AG04450 (cell line): ENCODE measurements at regions of chr6 and their contacts with region 1.

Region 1: DNA sequence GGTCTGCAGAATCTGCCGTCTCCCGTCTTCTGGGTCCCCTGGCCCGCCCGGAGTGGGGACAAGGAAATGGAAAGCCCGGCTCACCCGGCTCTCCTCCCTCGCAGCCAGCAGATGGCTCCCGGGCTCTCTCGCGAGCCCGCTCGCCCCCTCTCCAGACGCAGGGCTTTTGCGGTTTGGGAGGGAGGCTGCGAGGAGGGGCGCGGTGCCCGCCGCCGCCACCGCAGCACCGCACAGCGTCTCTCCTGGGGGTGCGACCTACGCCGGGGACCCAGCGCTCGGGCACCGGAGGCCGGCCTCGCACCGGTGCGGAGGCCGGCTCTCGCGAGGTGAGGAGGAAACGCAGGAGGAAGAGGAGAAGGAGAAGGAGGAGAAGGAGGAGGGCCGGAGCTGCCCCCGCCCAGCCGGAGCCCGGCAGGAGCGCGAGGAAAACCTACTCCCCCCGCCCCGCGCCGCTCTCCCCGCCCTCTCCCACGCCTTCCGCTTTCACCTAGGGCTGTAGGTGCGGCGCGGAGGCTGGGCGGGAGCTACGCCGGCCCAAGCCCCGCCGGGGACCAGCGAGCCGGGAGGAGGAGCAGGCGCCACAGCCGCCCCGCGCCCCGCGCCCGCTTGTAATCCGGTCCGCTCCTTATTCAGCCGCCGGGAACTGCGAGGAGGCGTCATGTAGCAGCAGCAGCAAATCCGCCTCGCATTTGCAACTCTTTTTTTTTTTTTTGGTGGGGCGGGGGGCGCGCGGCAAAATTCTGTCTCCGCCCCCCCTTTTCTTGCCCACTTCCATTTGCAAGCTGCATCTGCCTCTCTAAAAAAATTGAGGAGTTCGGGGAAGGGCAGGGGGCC is at the start of gene CARMIL1:
- DNase-seq: no peak
- H3K4me3 ChIP-seq: peak within 1 kb of the TSS; percentile 68
- H3K27ac ChIP-seq: no peak within 1 kb of the TSS
- H3K27me3 ChIP-seq: peaks cover 12% of the 10 kb centered on the region
- CTCF ChIP-seq: peak; percentile 67
- polyA plus RNA-seq, gene CARMIL1: 0.41 and 0.55 TPM in 2 replicates

Region 2: DNA sequence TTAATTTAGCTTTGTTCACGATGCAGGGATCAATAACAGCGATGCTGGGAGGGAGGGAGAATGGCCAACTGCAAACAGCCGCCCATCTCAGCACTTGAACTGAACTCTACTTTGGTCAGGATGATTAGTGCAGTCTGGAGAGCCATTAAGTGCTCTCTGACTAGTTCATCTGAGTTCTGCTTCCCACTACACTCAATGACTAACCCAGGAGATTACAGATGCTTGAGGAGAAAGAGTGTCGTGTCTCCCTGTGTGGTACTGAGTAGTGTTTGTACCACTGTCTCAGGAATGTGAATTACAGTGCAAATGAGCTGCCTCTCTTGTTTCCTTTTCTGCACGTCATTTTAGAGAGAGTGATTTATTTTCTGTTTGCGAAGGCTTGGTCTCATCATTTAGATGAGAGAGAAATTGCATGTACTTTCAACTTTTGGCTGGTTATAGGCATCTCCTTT is 23.6 kb after region 1 on chr6:
- CTCF ChIA-PET with region 1: interaction called, 11 read pairs
- POLR2A ChIA-PET with region 1: no interaction called
- DNase-seq: no peak
- H3K4me3 ChIP-seq: no peak overlapping the region
- H3K27ac ChIP-seq: peak overlapping the region; percentile 22
- H3K27me3 ChIP-seq: no peaks in the 10 kb centered on the region
- CTCF ChIP-seq: no peak

Region 3: GRCh38 chr6:25312703-25313501 is 33.8 kb after region 1 on chr6:
- CTCF ChIA-PET with region 1: interaction called, 13 read pairs
- POLR2A ChIA-PET with region 1: interaction called, 3 read pairs
- DNase-seq: no peak
- H3K4me3 ChIP-seq: no peak overlapping the region
- H3K27ac ChIP-seq: peak overlapping the region; percentile 31
- H3K27me3 ChIP-seq: no peaks in the 10 kb centered on the region
- CTCF ChIP-seq: peak; percentile 12; the same call in 1 of the 2 replicates

Region 4: DNA sequence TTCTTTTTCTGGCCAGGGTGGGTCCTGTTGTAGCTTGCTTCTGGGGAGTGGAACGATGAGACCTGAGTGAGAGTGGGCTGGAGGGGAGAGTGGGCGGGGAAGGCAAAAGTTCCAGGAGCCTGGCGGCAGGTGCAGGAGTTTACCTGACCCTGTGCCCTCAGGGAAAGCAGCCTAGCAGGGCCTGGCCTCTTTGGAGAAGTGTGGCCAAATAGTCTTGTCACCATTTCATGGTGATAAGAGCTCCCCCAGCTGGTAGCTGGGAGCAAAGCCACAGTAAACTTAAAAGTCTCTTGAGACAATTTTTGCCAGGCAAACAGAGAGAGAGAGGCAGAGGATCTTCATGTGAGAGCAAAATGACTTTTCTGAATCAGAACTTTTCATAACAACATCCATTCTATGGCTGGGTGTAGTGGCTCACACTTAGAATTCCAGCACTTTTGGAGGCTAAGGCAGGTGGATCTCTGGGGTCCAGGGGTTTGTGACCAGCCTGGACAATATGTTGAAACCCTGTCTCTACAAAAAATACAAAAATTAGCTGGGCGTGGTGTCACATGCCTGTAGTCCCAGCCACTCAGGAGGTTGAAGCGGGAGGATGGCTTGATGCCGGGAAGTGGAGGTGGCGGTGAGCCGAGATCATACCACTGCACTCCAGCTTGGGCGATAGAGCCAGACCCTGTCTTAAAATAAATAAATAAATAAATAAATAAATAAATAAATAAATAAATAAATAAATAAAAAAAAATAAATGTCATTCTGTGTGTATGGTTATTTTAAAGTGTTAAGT is 211.1 kb after region 1 on chr6:
- CTCF ChIA-PET with region 1: interaction called, 162 read pairs
- POLR2A ChIA-PET with region 1: interaction called, 5 read pairs
- DNase-seq: peak; percentile 47
- H3K4me3 ChIP-seq: no peak overlapping the region
- H3K27ac ChIP-seq: no peak overlapping the region
- H3K27me3 ChIP-seq: no peaks in the 10 kb centered on the region
- CTCF ChIP-seq: peak; percentile 91

Region 5: DNA sequence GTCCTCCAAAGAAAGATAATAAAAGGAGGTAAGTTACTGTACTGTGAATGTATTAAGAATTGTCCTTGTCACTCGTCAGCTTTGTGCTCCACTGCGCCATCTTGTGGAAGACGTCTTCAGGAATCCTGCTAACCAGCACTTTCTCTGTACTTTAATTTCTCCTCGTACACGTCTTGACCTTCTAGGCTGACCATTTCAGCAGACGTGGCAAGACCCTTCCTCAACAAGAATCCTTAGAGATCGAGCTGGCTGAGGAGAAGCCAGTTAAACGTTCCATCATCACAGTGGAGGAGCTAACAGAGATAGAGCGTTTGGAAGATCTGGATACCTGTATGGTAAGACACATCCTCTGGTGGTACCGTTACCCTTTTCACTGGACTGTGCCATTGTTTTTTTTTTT is 277.4 kb after region 1 on chr6:
- CTCF ChIA-PET with region 1: interaction called, 30 read pairs
- POLR2A ChIA-PET with region 1: interaction called, 4 read pairs
- DNase-seq: peak; percentile 42
- H3K4me3 ChIP-seq: no peak overlapping the region
- H3K27ac ChIP-seq: no peak overlapping the region
- H3K27me3 ChIP-seq: no peaks in the 10 kb centered on the region
- CTCF ChIP-seq: peak; percentile 87

Region 6: DNA sequence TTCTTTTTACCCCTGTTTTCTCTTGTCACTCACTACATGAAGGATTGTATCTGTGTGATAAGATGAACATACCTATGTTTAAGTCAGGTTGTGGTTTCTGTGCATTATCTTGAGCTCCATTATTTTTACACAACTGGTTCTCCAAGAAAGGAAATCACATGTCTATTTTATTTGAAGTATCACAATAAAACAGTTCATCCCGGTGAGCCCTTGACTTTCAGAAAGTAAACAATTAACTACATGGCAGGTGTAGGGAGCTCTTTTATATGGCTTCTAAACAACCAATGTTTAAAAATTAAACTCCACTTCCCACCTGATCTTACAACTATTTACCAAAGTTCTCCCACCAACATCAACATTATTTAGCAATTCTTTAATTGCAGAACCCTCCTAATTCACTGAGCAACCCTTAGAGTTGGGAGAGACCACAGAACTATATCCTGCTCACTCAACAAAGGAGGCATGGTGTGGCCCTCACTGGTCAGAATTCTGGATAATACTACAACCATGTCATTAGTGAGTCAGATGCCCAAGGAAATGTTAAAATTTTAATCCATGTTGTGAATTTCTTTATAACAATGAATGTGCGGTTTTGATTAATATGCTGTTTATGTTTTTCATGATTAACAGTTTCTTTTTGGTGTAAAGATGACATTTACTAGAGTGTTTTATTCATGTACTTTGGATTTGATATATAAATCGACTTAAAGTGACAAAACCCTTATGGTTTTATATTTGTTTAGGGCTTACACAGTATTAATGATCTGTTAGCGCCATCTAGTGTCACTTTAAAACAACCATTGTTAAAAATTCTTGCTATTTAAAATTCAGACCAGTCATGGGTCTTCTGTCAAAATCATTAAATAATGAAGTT is 322.9 kb after region 1 on chr6:
- CTCF ChIA-PET with region 1: interaction called, 21 read pairs
- POLR2A ChIA-PET with region 1: no interaction called
- DNase-seq: peak; percentile 15
- H3K4me3 ChIP-seq: no peak overlapping the region
- H3K27ac ChIP-seq: no peak overlapping the region
- H3K27me3 ChIP-seq: no peaks in the 10 kb centered on the region
- CTCF ChIP-seq: peak; percentile 55